GM12878 (cell line): ENCODE measurements at regions of chr3 and their contacts with region 1.

Region 1: DNA sequence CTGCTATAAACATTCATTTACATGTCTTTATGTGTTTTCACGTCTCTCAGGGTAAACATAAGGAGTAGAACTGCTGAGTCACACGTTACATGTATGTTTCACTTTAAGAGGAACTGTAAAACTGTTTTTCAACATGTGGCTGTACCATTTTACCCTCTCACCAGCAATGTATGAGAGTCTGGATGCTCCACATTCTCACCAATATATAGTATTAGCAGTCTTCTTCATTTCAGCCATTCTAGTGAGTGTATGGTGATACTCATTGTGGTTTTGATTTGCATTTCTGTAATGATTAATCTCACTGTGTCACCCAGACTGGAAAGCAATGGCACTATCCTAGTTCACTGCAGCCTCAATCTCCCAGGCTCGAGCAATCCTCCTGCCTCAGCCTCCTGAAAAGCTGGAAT is 37.1 kb downstream of the PHC3 start:
- DNase-seq: peak; percentile 65
- ATAC-seq: peak; percentile 97
- H3K4me3 ChIP-seq: no peak overlapping the region
- H3K27ac ChIP-seq: peak overlapping the region; percentile 67
- H3K4me1 ChIP-seq: peaks cover 13% of the 10 kb centered on the region
- H3K27me3 ChIP-seq: no peaks in the 10 kb centered on the region
- CTCF ChIP-seq: no peak
- EP300 ChIP-seq: peak in 1 of 2 experiments; percentile 54; a peak in 1 of 4 replicates
- POLR2A ChIP-seq: no peak
- RAD21 ChIP-seq: no peak

Region 2: GRCh38 chr3:170171563-170171962 is 27.1 kb after region 1 on chr3:
- CTCF ChIA-PET with region 1: interaction called, 4 read pairs
- POLR2A ChIA-PET with region 1: interaction called, 3 read pairs
- RAD21 ChIA-PET with region 1: interaction called, 10 read pairs
- SMC1A ChIA-PET with region 1: interaction called, 15 read pairs
- in situ Hi-C with region 1: no loop called
- intact Hi-C with region 1: no loop called
- DNase-seq: no peak
- ATAC-seq: peak; percentile 77
- H3K4me3 ChIP-seq: peak overlapping the region; percentile 11; the same call in 1 of the 2 replicates
- H3K27ac ChIP-seq: peak overlapping the region; percentile 71
- H3K4me1 ChIP-seq: peaks cover 13% of the 10 kb centered on the region
- H3K27me3 ChIP-seq: no peaks in the 10 kb centered on the region
- CTCF ChIP-seq: no peak
- EP300 ChIP-seq: no peak
- POLR2A ChIP-seq: no peak
- RAD21 ChIP-seq: no peak